A549 (cell line): ENCODE measurements at regions of chr14 and their contacts with region 1.

Region 1: DNA sequence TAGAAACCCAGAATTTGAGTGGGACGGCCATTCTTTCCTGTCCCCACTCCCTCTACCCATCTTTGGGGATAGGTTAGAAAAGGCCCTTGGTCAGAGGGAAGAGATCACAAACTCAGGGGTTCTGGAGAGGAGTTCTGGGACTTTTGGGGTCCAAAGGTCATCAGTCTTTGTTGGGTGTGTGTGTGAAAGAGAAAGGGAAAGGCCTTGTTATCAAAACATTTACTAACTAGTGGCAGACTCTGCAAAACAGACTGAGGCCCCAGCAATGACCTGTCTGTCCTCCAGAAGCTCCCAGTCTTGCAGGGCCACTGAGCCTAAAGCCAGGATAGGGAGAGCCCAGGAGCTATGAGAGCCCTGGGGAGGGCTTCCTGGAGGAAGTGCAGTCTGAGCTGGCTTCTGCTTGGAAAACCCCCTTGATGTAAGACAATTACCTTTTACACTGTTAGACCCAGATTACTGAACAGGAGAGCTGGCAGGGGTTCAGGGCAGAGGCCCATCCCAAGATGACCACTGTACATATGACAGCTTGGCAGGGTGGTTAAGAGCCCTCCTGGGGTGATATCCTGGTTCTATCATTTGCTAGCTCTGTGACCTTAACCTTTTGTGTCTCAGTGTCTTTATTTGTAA is 429.1 kb upstream of the CCDC196 start:
- DNase-seq: no peak
- ATAC-seq: no peak
- H3K4me3 ChIP-seq: no peak overlapping the region
- H3K27ac ChIP-seq: no peak overlapping the region
- H3K4me1 ChIP-seq: no peaks in the 10 kb centered on the region
- CTCF ChIP-seq: no peak
- EP300 ChIP-seq: no peak
- POLR2A ChIP-seq: no peak
- RAD21 ChIP-seq: no peak

Region 2: GRCh38 chr14:66070509-66071319 is 13.7 kb after region 1 on chr14:
- CTCF ChIA-PET with region 1: interaction called, 17 read pairs
- POLR2A ChIA-PET with region 1: no interaction called
- DNase-seq: peak; percentile 16 to 55
- ATAC-seq: peak; percentile 55 to 90; a peak in 3 of 6 replicates
- H3K4me3 ChIP-seq: no peak overlapping the region
- H3K27ac ChIP-seq: no peak overlapping the region
- H3K4me1 ChIP-seq: no peaks in the 10 kb centered on the region
- CTCF ChIP-seq: peak; percentile 71
- EP300 ChIP-seq: no peak
- POLR2A ChIP-seq: no peak
- RAD21 ChIP-seq: peak; percentile 68 to 69